Activated B cell treated with CpG ODN at 0.5 μM for 24 hours (primary cell): ENCODE measurements at regions of chr7 and their contacts with region 1.

Region 1: GRCh38 chr7:35185907-35186731 is 67.8 kb downstream of the TBX20 start:
- DNase-seq: no peak
- ATAC-seq: no peak
- H3K4me3 Mint-ChIP-seq: peak overlapping the region; percentile 45
- H3K27ac Mint-ChIP-seq: no peak overlapping the region
- H3K4me1 Mint-ChIP-seq: peaks cover 10% of the 10 kb centered on the region
- H3K27me3 Mint-ChIP-seq: peaks cover 25% of the 10 kb centered on the region
- CTCF ChIP-seq: no peak

Region 2: GRCh38 chr7:35537067-35538023 is 351.2 kb after region 1 on chr7:
- CTCF ChIA-PET with region 1: no interaction called
- POLR2A ChIA-PET with region 1: no interaction called
- intact Hi-C with region 1: loop called (anchors 1 kb)
- DNase-seq: peak; percentile 76
- ATAC-seq: peak; percentile 97
- H3K4me3 Mint-ChIP-seq: peak overlapping the region; percentile 84
- H3K27ac Mint-ChIP-seq: no peak overlapping the region
- H3K4me1 Mint-ChIP-seq: peaks cover 4% of the 10 kb centered on the region
- H3K27me3 Mint-ChIP-seq: peaks cover 23% of the 10 kb centered on the region
- CTCF ChIP-seq: peak; percentile 82

Region 3: GRCh38 chr7:35624299-35625186 is 438.4 kb after region 1 on chr7:
- CTCF ChIA-PET with region 1: no interaction called
- POLR2A ChIA-PET with region 1: no interaction called
- intact Hi-C with region 1: loop called (anchors 2 kb)
- DNase-seq: peak; percentile 18
- ATAC-seq: peak; percentile 86
- H3K4me3 Mint-ChIP-seq: no peak overlapping the region
- H3K27ac Mint-ChIP-seq: no peak overlapping the region
- H3K4me1 Mint-ChIP-seq: peaks cover 2% of the 10 kb centered on the region
- H3K27me3 Mint-ChIP-seq: no peaks in the 10 kb centered on the region
- CTCF ChIP-seq: peak; percentile 81